ENCODE measurements at regions of chr6 and their contacts with region 1.

Region 1: DNA sequence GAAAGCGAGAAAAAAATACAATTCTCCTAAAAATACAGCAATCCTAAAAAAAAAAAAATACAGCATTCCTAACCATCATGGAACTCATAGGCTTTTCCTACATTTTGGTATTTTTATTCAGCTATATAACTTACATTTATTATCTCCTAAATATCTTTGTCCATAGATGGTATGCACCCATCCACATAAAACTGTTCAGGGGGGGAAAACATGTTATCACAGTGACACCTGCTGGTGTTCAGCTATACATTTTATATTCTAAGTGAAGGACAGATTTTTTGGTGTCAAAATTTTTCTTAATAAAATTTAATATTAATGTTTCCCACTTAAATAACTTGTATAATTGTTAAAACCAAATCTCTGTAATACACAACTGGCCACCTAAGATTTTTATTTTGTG is 58.0 kb downstream of the BLOC1S5 start:
- DNase-seq: no peak
- H3K4me3 ChIP-seq: no peak overlapping the region
- H3K27ac ChIP-seq: no peak overlapping the region
- H3K27me3 ChIP-seq: no peaks in the 10 kb centered on the region
- CTCF ChIP-seq: peak; percentile 53

Region 2: GRCh38 chr6:7878401-7878964 is 127.7 kb before region 1 on chr6:
- CTCF ChIA-PET with region 1: no interaction called
- POLR2A ChIA-PET with region 1: no interaction called
- DNase-seq: no peak
- H3K4me3 ChIP-seq: no peak overlapping the region
- H3K27ac ChIP-seq: no peak overlapping the region
- H3K27me3 ChIP-seq: no peaks in the 10 kb centered on the region
- CTCF ChIP-seq: no peak

Region 3: GRCh38 chr6:7910654-7911344 is 95.4 kb before region 1 on chr6 and contains the start of gene TXNDC5:
- CTCF ChIA-PET with region 1: interaction called, 19 read pairs
- POLR2A ChIA-PET with region 1: no interaction called
- DNase-seq: no peak
- H3K4me3 ChIP-seq: peak within 1 kb of the TSS; percentile 83
- H3K27ac ChIP-seq: peak within 1 kb of the TSS; percentile 39
- H3K27me3 ChIP-seq: peaks cover 3% of the 10 kb centered on the region
- CTCF ChIP-seq: no peak
- polyA plus RNA-seq, gene TXNDC5: 285 and 310 TPM in 2 replicates

Region 4: GRCh38 chr6:7976485-7977056 is 29.6 kb before region 1 on chr6:
- CTCF ChIA-PET with region 1: no interaction called
- POLR2A ChIA-PET with region 1: no interaction called
- DNase-seq: no peak
- H3K4me3 ChIP-seq: no peak overlapping the region
- H3K27ac ChIP-seq: no peak overlapping the region
- H3K27me3 ChIP-seq: no peaks in the 10 kb centered on the region
- CTCF ChIP-seq: no peak

Region 5: DNA sequence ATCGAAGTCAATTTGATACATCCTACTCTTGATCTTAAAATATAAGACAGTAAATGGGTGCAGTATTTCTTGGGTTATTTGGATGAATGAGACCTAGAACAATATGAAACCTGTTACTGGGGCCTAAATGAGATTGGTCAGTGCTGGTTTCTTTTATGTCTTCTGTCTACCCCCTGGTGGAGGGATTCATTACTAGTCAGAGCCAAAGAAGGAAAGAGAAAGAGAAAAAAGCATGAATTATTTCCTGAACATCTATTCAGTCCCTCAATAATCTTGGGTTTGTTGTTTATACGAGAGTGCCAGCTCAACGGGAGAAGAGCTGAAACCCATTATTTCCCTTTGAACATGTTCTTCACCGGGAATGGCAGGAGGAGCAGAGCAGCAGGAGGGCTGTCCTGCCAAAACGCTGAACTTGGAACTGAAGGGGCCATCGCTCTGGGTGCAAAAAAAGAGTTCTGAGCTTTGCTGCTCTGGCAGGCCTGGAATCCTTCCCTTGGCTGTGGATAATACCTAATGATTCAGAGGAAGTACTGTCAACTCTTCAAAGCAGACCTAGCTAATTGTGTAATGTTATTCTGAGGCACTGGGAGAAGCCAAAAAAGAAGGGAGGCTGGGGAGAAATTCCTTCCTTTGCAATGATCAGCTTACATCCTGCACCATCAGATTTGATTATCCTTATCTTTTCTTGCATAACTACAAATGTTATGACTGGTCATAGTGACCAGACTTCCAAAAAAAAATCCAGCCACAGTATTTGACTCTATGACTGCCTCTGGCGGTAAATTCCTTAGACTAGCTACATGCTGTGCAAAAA is 14.0 kb before region 1 on chr6:
- CTCF ChIA-PET with region 1: interaction called, 11 read pairs
- POLR2A ChIA-PET with region 1: no interaction called
- DNase-seq: peak; percentile 49
- H3K4me3 ChIP-seq: peak overlapping the region; percentile 42
- H3K27ac ChIP-seq: peak overlapping the region; percentile 48
- H3K27me3 ChIP-seq: no peaks in the 10 kb centered on the region
- CTCF ChIP-seq: peak; percentile 63

Region 6: DNA sequence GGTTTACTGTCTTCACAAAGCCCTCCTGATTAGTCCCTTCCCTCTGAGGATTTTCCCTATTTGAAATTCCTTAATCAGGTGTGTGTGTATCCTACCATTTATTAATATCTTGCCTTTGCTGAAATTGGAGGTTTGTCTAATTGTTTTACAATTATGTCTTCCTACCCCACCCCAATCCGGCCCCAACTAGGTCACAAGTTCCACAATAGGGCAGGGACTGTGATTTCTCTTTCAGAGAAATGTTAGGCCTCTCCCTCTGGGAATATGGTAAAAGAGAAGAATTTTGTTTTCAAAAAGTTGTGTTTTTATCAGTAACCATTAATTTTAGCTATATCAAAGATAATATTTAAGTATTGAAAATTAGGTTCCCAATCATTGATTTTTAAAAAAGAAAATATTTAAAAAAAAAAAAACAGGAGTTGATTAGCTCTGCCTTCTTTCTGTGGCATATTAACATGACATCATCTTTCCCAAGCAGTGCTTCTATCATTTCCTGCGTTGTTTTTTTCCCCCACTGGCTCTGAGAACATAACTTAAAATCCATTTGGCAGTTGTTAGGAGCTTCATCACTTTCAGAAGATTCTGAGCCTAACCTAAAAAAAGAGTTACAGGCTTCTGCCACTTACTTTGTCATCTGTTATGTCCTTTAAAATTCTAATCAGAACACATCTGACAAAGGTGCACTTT is 21.9 kb after region 1 on chr6:
- CTCF ChIA-PET with region 1: no interaction called
- POLR2A ChIA-PET with region 1: no interaction called
- DNase-seq: no peak
- H3K4me3 ChIP-seq: no peak overlapping the region
- H3K27ac ChIP-seq: no peak overlapping the region
- H3K27me3 ChIP-seq: no peaks in the 10 kb centered on the region
- CTCF ChIP-seq: no peak

Measured in AG04450 (cell line).